Activated naive CD4-positive, alpha-beta T cell treated with anti-CD3 and anti-CD28 coated beads for 36 hours (primary cell): ENCODE measurements at regions of chr19 and their contacts with region 1.

Region 1: GRCh38 chr19:48170038-48170812 is at the starts of genes LIG1 and ZSWIM9:
- DNase-seq: peak; percentile 93
- H3K4me3 Mint-ChIP-seq: peak within 1 kb of the TSS; percentile 90
- H3K27ac Mint-ChIP-seq: peak within 1 kb of the TSS; percentile 97
- H3K4me1 Mint-ChIP-seq: peaks cover 30% of the 10 kb centered on the region
- H3K27me3 Mint-ChIP-seq: no peaks in the 10 kb centered on the region
- total RNA-seq, gene LIG1: 187 to 195 TPM
- total RNA-seq, gene ZSWIM9: 6.1 to 6.7 TPM

Region 2: GRCh38 chr19:48746738-48747575 is 576.7 kb after region 1 on chr19 and contains the start of gene IZUMO1:
- CTCF ChIA-PET with region 1: no interaction called
- intact Hi-C with region 1: loop called (anchors 5 kb)
- DNase-seq: peak; percentile 73
- H3K4me3 Mint-ChIP-seq: peak within 1 kb of the TSS; percentile 34
- H3K27ac Mint-ChIP-seq: no peak within 1 kb of the TSS
- H3K4me1 Mint-ChIP-seq: peaks cover 15% of the 10 kb centered on the region
- H3K27me3 Mint-ChIP-seq: peaks cover 12% of the 10 kb centered on the region
- total RNA-seq, gene IZUMO1: not detected